ENCODE measurements at regions of chr2 and their contacts with region 1.

Region 1: GRCh38 chr2:17830053-17831034 is 14.1 kb downstream of the MSGN1 start:
- DNase-seq: peak; percentile 92
- H3K4me3 ChIP-seq: peak overlapping the region; percentile 43 to 59
- H3K27ac ChIP-seq: no peak overlapping the region
- H3K4me1 ChIP-seq: peaks cover 0 to 10% of the 10 kb centered on the region in 2 experiments; a peak in 1 of 4 replicates
- H3K27me3 ChIP-seq: peaks cover 11% of the 10 kb centered on the region; the same call in 1 of the 2 replicates
- CTCF ChIP-seq: peak; percentile 94
- EP300 ChIP-seq: no peak
- RAD21 ChIP-seq: peak; percentile 79

Region 2: GRCh38 chr2:17786727-17787126 is 43.6 kb before region 1 on chr2:
- CTCF ChIA-PET with region 1: interaction called, 11 read pairs
- POLR2A ChIA-PET with region 1: no interaction called
- DNase-seq: no peak
- H3K4me3 ChIP-seq: no peak overlapping the region
- H3K27ac ChIP-seq: no peak overlapping the region
- H3K4me1 ChIP-seq: peaks cover 4 to 22% of the 10 kb centered on the region in 2 experiments; a peak in 2 of 4 replicates
- H3K27me3 ChIP-seq: no peaks in the 10 kb centered on the region
- CTCF ChIP-seq: no peak
- EP300 ChIP-seq: no peak
- RAD21 ChIP-seq: no peak

Region 3: GRCh38 chr2:17813742-17814473 is 16.4 kb before region 1 on chr2:
- CTCF ChIA-PET with region 1: interaction called, 21 read pairs
- POLR2A ChIA-PET with region 1: no interaction called
- DNase-seq: no peak
- H3K4me3 ChIP-seq: no peak overlapping the region; a peak in 1 of 4 replicates
- H3K27ac ChIP-seq: no peak overlapping the region
- H3K4me1 ChIP-seq: peaks cover 0 to 3% of the 10 kb centered on the region in 2 experiments; a peak in 2 of 4 replicates
- H3K27me3 ChIP-seq: no peaks in the 10 kb centered on the region
- CTCF ChIP-seq: no peak
- EP300 ChIP-seq: no peak
- RAD21 ChIP-seq: no peak

Region 4: DNA sequence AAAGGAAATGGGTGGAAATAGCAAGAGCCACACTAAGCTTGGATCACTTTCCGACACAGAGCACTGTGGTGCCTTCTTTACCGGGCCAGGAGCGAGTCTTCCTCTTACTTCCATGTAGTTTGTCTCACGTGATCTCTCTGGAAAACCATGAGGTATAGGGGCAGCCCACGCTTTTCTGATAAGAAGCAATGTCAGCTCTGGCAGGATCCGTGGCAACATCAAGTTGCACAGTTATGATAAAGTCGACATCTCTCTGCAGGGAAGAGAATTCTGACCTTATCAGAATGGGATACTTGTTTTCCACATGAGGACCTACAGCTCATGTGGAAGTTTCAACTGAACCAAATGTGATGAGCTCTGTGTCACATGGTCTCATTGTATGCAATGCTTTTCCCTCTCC is 15.5 kb after region 1 on chr2:
- CTCF ChIA-PET with region 1: interaction called, 43 read pairs
- POLR2A ChIA-PET with region 1: no interaction called
- DNase-seq: no peak
- H3K4me3 ChIP-seq: no peak overlapping the region
- H3K27ac ChIP-seq: no peak overlapping the region
- H3K4me1 ChIP-seq: no peaks in the 10 kb centered on the region
- H3K27me3 ChIP-seq: no peaks in the 10 kb centered on the region; the same call in 1 of the 2 replicates
- CTCF ChIP-seq: no peak
- EP300 ChIP-seq: no peak
- RAD21 ChIP-seq: no peak